Activated naive CD4-positive, alpha-beta T cell treated with anti-CD3 and anti-CD28 coated beads for 36 hours (primary cell): ENCODE measurements at regions of chr11 and their contacts with region 1.

Region 1: DNA sequence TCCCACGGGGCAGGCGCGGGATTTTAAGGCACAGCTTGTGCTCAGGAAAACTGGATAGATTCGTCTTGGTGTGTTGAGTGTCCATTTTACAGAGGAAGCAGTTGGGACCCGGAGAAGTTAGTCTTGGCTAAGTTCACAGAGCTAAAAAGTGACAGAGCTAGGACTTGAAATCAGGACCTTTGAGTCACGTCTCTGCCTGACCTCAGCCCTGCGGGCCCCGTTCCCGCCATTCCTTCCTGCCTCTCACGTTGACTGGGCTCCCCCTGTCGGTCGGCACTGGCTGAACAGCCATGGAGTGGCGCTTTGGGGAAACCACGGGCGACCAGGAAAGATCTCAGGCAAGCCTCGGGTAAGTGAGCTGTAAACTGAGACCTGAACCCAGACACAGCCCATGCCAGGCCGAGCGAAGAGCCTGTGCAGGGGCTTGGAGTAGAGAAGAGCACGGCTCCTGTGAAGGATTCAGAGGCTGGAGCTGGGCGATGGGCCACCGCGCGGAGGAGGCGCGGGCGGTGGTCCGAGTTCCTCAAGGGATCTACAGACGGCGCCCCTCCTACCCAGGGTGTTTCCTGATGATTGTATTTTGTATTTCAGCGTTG is 54.1 kb downstream of the WNT11 start:
- DNase-seq: peak; percentile 96
- H3K4me3 Mint-ChIP-seq: peak overlapping the region; percentile 63
- H3K27ac Mint-ChIP-seq: peak overlapping the region; percentile 57
- H3K4me1 Mint-ChIP-seq: peaks cover 16% of the 10 kb centered on the region
- H3K27me3 Mint-ChIP-seq: peaks cover 22% of the 10 kb centered on the region

Region 2: GRCh38 chr11:75721855-75722668 is 430.1 kb before region 1 on chr11:
- CTCF ChIA-PET with region 1: interaction called, 7 read pairs
- intact Hi-C with region 1: loop called (anchors 1 kb)
- DNase-seq: no peak
- H3K4me3 Mint-ChIP-seq: no peak overlapping the region
- H3K27ac Mint-ChIP-seq: no peak overlapping the region
- H3K4me1 Mint-ChIP-seq: no peaks in the 10 kb centered on the region
- H3K27me3 Mint-ChIP-seq: no peaks in the 10 kb centered on the region

Region 3: GRCh38 chr11:75896843-75897419 is 255.3 kb before region 1 on chr11:
- CTCF ChIA-PET with region 1: interaction called, 82 read pairs
- intact Hi-C with region 1: loop called (anchors 1 kb)
- DNase-seq: no peak
- H3K4me3 Mint-ChIP-seq: no peak overlapping the region
- H3K27ac Mint-ChIP-seq: no peak overlapping the region
- H3K4me1 Mint-ChIP-seq: peaks cover 23% of the 10 kb centered on the region
- H3K27me3 Mint-ChIP-seq: no peaks in the 10 kb centered on the region

Region 4: DNA sequence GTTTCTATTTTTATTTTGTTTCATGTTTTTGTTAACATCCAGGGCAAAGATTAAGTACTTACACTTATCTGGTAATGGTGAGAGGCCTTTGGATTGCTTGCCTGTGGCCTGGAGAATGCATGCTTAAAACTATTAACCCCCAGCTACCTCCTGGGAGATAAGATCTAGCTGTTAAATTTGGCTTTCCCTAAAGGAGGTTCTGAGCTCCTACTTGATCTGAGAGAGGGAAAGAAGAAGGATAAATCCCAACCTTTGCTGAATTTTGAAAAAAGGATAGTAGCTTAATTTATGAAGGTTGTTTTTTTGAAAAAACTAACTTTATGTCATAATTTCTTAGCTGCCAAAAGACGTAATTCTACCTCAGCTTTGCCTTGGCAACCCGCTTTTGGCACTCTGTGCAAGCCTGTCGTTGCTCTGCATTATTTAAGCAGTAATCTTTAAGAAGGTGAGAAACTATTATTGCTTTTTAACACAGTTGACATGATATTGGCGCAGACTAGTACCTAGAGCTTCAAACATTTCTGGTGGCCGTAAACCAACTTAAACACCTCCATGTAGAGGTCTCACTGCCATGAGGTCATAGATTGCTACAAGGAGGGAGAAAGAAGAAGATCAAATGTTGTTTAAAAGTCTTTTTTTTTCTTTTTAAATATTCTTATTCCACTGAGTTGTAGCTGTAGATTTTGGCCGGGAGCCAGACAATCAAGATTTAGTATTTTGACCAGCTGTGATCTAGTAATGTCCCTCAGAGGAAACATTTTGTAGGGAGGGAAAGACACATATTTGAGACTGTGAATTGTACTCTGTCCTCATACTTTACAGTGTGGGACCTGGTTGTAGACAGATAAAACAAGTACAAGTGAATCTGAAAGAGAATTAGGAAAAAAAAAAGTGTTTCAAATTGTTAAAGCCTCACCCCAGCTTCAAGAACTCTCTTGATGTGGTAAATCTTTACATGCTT is 20.2 kb before region 1 on chr11:
- CTCF ChIA-PET with region 1: interaction called, 24 read pairs
- intact Hi-C with region 1: no loop called
- DNase-seq: no peak
- H3K4me3 Mint-ChIP-seq: no peak overlapping the region
- H3K27ac Mint-ChIP-seq: peak overlapping the region; percentile 54
- H3K4me1 Mint-ChIP-seq: peaks cover 36% of the 10 kb centered on the region
- H3K27me3 Mint-ChIP-seq: no peaks in the 10 kb centered on the region

Region 5: GRCh38 chr11:76318744-76319384 is 166.7 kb after region 1 on chr11:
- CTCF ChIA-PET with region 1: interaction called, 6 read pairs
- intact Hi-C with region 1: loop called (anchors 2 kb)
- DNase-seq: peak; percentile 89
- H3K4me3 Mint-ChIP-seq: no peak overlapping the region
- H3K27ac Mint-ChIP-seq: no peak overlapping the region
- H3K4me1 Mint-ChIP-seq: peaks cover 2% of the 10 kb centered on the region
- H3K27me3 Mint-ChIP-seq: peaks cover 28% of the 10 kb centered on the region